ENCODE measurements at regions of chr11 and their contacts with region 1.

Region 1: GRCh38 chr11:67288452-67289225 is 464 bp upstream of the ANKRD13D start:
- DNase-seq: peak; percentile 96
- ATAC-seq: peak; percentile 75
- H3K4me3 Mint-ChIP-seq: peak overlapping the region; percentile 63
- H3K27ac Mint-ChIP-seq: peak overlapping the region; percentile 96
- H3K4me1 Mint-ChIP-seq: peaks cover 69% of the 10 kb centered on the region
- H3K27me3 Mint-ChIP-seq: no peaks in the 10 kb centered on the region

Region 2: DNA sequence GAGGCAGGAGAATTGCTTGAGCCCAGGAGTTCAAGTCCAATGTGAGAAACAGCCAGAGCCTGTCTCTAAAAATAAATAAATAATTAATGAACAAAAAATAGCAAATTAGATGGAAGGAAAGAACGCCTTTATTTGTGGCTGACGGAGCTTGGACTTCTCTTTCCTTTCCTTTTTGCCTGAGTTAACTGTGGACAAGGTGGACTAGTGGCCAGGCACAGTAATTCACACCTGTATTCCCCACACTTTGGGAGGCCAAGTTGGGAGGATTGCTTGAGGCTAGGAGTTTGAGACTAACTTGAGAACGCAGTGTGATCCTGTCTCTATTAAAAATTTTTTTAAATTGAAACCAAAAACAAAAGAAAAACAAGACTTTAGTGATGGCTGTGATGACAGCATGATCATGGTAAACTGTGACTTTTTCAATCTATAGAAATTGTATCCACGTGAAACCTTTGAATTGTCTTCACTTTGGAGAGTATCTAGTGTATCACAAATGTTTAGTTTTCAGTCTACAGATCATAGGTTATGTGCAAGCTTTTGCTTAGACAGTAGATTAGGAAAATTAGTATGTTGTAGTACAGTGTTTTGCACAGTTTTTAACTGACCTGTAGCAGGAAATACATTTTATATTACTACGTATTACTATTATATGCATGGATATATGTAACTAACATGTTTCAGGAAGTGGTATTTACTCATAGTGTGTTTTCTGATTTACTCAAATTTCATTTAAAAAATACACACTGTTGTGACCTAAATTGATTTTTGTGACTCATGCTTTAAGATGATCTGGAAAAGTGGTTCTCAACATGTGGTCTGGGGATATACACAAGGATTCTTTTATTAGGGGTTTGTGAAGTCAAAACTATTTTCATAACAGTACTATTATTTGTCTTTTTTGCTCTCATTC is 127.5 kb before region 1 on chr11:
- CTCF ChIA-PET with region 1: no interaction called
- DNase-seq: no peak
- ATAC-seq: peak; percentile 80
- H3K4me3 Mint-ChIP-seq: no peak overlapping the region
- H3K27ac Mint-ChIP-seq: no peak overlapping the region
- H3K4me1 Mint-ChIP-seq: peaks cover 27% of the 10 kb centered on the region
- H3K27me3 Mint-ChIP-seq: no peaks in the 10 kb centered on the region

Region 3: GRCh38 chr11:67239783-67240575 is 48.7 kb before region 1 on chr11:
- CTCF ChIA-PET with region 1: no interaction called
- DNase-seq: peak; percentile 99
- ATAC-seq: peak; percentile 94
- H3K4me3 Mint-ChIP-seq: peak overlapping the region; percentile 95
- H3K27ac Mint-ChIP-seq: peak overlapping the region; percentile 93
- H3K4me1 Mint-ChIP-seq: peaks cover 44% of the 10 kb centered on the region
- H3K27me3 Mint-ChIP-seq: no peaks in the 10 kb centered on the region

Region 4: GRCh38 chr11:67277231-67277961 is 11.2 kb before region 1 on chr11:
- CTCF ChIA-PET with region 1: interaction called, 137 read pairs
- DNase-seq: peak; percentile 95
- ATAC-seq: peak; percentile 86
- H3K4me3 Mint-ChIP-seq: peak overlapping the region; percentile 57
- H3K27ac Mint-ChIP-seq: peak overlapping the region; percentile 86
- H3K4me1 Mint-ChIP-seq: peaks cover 78% of the 10 kb centered on the region
- H3K27me3 Mint-ChIP-seq: no peaks in the 10 kb centered on the region

Region 5: GRCh38 chr11:67303132-67303834 is 14.6 kb after region 1 on chr11 and contains the start of gene SSH3:
- CTCF ChIA-PET with region 1: interaction called, 14 read pairs
- DNase-seq: peak; percentile 67
- ATAC-seq: peak; percentile 92
- H3K4me3 Mint-ChIP-seq: peak within 1 kb of the TSS; percentile 69
- H3K27ac Mint-ChIP-seq: peak within 1 kb of the TSS; percentile 24
- H3K4me1 Mint-ChIP-seq: peaks cover 12% of the 10 kb centered on the region
- H3K27me3 Mint-ChIP-seq: no peaks in the 10 kb centered on the region
- total RNA-seq, gene SSH3: 10.7 to 26.4 TPM